B cell (primary cell): ENCODE measurements at regions of chr7 and their contacts with region 1.

Region 1: GRCh38 chr7:16420649-16421332 is 547 bp downstream of the CRPPA start:
- DNase-seq: peak; percentile 91
- ATAC-seq: peak; percentile 89
- H3K4me3 ChIP-seq: peak overlapping the region; percentile 55 to 86 (median 65)
- H3K4me3 Mint-ChIP-seq: peak overlapping the region; percentile 95
- H3K27ac ChIP-seq: peak overlapping the region; percentile 78 to 81
- H3K27ac Mint-ChIP-seq: peak overlapping the region; percentile 95
- H3K4me1 ChIP-seq: peaks cover 10 to 14% of the 10 kb centered on the region in 2 donors
- H3K4me1 Mint-ChIP-seq: peaks cover 24% of the 10 kb centered on the region
- H3K27me3 ChIP-seq: no peaks in the 10 kb centered on the region
- H3K27me3 Mint-ChIP-seq: no peaks in the 10 kb centered on the region
- CTCF ChIP-seq: peak; percentile 61

Region 2: GRCh38 chr7:16431646-16432424 is 11.0 kb after region 1 on chr7:
- CTCF ChIA-PET with region 1: interaction called, 31 read pairs
- POLR2A ChIA-PET with region 1: no interaction called
- intact Hi-C with region 1: no loop called
- DNase-seq: peak; percentile 46
- ATAC-seq: peak; percentile 61
- H3K4me3 ChIP-seq: no peak overlapping the region
- H3K4me3 Mint-ChIP-seq: no peak overlapping the region
- H3K27ac ChIP-seq: no peak overlapping the region
- H3K27ac Mint-ChIP-seq: no peak overlapping the region
- H3K4me1 ChIP-seq: no peaks in the 10 kb centered on the region
- H3K4me1 Mint-ChIP-seq: no peaks in the 10 kb centered on the region
- H3K27me3 ChIP-seq: no peaks in the 10 kb centered on the region
- H3K27me3 Mint-ChIP-seq: peaks cover 7% of the 10 kb centered on the region
- CTCF ChIP-seq: peak; percentile 49

Region 3: GRCh38 chr7:16645593-16646471 is 225.0 kb after region 1 on chr7 and contains the starts of genes ANKMY2 and BZW2:
- CTCF ChIA-PET with region 1: interaction called, 3 read pairs
- POLR2A ChIA-PET with region 1: interaction called, 7 read pairs
- intact Hi-C with region 1: loop called (anchors 1 kb)
- DNase-seq: peak; percentile 96
- ATAC-seq: peak; percentile 86
- H3K4me3 ChIP-seq: peak within 1 kb of the TSS; percentile 75 to 99 (median 91)
- H3K4me3 Mint-ChIP-seq: peak within 1 kb of the TSS; percentile 99
- H3K27ac ChIP-seq: peak within 1 kb of the TSS; percentile 84 to 89
- H3K27ac Mint-ChIP-seq: peak within 1 kb of the TSS; percentile 99
- H3K4me1 ChIP-seq: peaks cover 20 to 26% of the 10 kb centered on the region in 2 donors
- H3K4me1 Mint-ChIP-seq: peaks cover 61% of the 10 kb centered on the region
- H3K27me3 ChIP-seq: no peaks in the 10 kb centered on the region
- H3K27me3 Mint-ChIP-seq: no peaks in the 10 kb centered on the region
- CTCF ChIP-seq: no peak
- total RNA-seq, gene ANKMY2: 17.8 and 18.2 TPM in 2 replicates
- total RNA-seq, gene BZW2: 17.0 and 18.4 TPM in 2 replicates

Region 4: GRCh38 chr7:16753102-16753931 is 332.5 kb after region 1 on chr7 and contains the start of gene TSPAN13:
- CTCF ChIA-PET with region 1: no interaction called
- POLR2A ChIA-PET with region 1: no interaction called
- intact Hi-C with region 1: loop called (anchors 2 kb)
- DNase-seq: peak; percentile 87
- ATAC-seq: peak; percentile 86
- H3K4me3 ChIP-seq: peak within 1 kb of the TSS; percentile 80 to 92 (median 86)
- H3K4me3 Mint-ChIP-seq: peak within 1 kb of the TSS; percentile 100
- H3K27ac ChIP-seq: peak within 1 kb of the TSS; percentile 58 to 71
- H3K27ac Mint-ChIP-seq: peak within 1 kb of the TSS; percentile 96
- H3K4me1 ChIP-seq: peaks cover 29% of the 10 kb centered on the region in 2 donors
- H3K4me1 Mint-ChIP-seq: peaks cover 36% of the 10 kb centered on the region
- H3K27me3 ChIP-seq: no peaks in the 10 kb centered on the region
- H3K27me3 Mint-ChIP-seq: no peaks in the 10 kb centered on the region
- CTCF ChIP-seq: no peak
- total RNA-seq, gene TSPAN13: 26.2 and 26.3 TPM in 2 replicates

Region 5: DNA sequence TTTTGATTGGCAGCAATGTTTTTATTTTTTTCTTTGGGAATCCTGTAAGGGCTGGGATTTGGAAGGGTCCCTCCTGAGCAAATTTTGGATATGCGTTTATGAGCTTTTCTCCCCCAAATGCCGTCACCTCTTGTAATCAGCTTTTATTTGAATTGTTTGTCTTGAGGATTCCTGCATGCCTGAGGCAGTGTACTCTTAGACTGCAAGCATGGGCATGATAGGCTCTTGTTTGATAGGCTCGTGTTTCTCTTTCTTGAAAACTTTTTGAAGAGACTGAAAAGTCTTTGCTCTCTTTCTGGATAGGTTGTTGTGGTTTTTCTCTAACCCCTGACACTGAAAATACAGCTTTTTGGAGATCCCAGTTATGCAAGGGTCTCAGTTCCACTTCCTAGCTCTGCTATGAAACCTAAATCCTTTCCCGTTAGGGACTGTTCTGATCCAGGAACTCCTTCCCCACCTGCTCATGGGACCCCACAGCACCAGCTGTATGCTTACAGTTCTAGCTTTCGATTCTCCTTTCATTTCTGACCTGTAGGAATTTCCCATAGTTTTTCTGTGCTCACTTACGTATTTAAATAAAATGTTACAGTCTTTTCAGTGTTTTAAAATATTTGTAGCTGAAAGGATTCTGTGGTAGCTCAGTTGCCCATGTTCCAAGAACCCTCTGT is 350.0 kb after region 1 on chr7:
- CTCF ChIA-PET with region 1: no interaction called
- POLR2A ChIA-PET with region 1: no interaction called
- intact Hi-C with region 1: no loop called
- DNase-seq: no peak
- ATAC-seq: no peak
- H3K4me3 ChIP-seq: no peak overlapping the region
- H3K4me3 Mint-ChIP-seq: peak overlapping the region; percentile 40
- H3K27ac ChIP-seq: peak overlapping the region in 1 of 2 donors; percentile 55
- H3K27ac Mint-ChIP-seq: peak overlapping the region; percentile 44
- H3K4me1 ChIP-seq: peaks cover 23 to 45% of the 10 kb centered on the region in 2 donors
- H3K4me1 Mint-ChIP-seq: peaks cover 61% of the 10 kb centered on the region
- H3K27me3 ChIP-seq: no peaks in the 10 kb centered on the region
- H3K27me3 Mint-ChIP-seq: no peaks in the 10 kb centered on the region
- CTCF ChIP-seq: no peak

Region 6: GRCh38 chr7:17940302-17940883 is 1519.6 kb after region 1 on chr7 and contains the start of gene SNX13:
- CTCF ChIA-PET with region 1: no interaction called
- POLR2A ChIA-PET with region 1: no interaction called
- intact Hi-C with region 1: loop called (anchors 5 kb)
- DNase-seq: peak; percentile 95
- ATAC-seq: peak; percentile 90
- H3K4me3 ChIP-seq: peak within 1 kb of the TSS; percentile 81 to 96 (median 95)
- H3K4me3 Mint-ChIP-seq: peak within 1 kb of the TSS; percentile 98
- H3K27ac ChIP-seq: peak within 1 kb of the TSS; percentile 97
- H3K27ac Mint-ChIP-seq: peak within 1 kb of the TSS; percentile 99
- H3K4me1 ChIP-seq: peaks cover 14 to 22% of the 10 kb centered on the region in 2 donors
- H3K4me1 Mint-ChIP-seq: peaks cover 38% of the 10 kb centered on the region
- H3K27me3 ChIP-seq: no peaks in the 10 kb centered on the region
- H3K27me3 Mint-ChIP-seq: no peaks in the 10 kb centered on the region
- CTCF ChIP-seq: no peak
- total RNA-seq, gene SNX13: 58.1 and 62.6 TPM in 2 replicates